Naive thymus-derived CD4-positive, alpha-beta T cell (primary cell): ENCODE measurements at regions of chr13 and their contacts with region 1.

Region 1: DNA sequence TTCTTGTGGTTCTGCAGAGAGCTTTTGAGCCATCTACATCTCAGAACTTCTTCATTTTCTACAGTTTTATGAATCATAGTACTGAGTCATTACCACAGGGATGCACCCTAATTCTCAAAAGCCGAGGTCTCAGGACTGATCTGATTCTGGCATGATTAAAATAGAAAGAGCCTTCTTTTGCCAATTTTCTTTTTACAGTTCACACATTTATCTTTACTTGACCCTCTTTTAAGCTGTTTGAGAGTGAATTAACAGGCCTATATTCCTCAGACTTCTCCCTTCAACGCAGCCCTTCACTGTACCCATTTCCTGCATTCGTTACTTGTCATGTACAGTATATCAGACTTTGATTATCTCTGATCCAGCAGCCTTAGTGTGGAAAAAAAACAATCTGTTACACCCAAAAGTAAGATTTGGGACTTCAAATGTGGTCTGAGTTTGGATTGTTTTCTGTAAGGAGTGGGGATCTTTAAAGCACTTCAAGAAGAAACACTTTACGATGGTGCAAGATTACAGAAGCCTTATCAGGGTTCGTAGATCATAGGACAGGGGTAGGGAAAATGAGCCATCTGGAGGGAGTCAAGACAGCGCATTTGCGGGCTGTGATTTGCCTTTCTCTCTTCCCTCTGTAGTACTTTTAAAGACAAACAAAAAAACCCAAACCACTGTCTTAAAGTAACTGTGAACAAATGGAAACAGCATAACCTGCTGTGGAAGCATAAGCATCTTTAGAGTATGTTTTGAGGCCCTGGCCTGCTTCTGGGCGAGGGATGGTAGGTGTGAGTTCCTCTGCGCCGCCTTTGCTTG is 15.3 kb upstream of the GPR183 start:
- DNase-seq: peak in 6 of 9 donors; percentile 35 to 64 (median 48)
- ATAC-seq: peak; percentile 81
- H3K4me3 ChIP-seq: peak overlapping the region; percentile 2
- H3K4me3 Mint-ChIP-seq: peak overlapping the region; percentile 51 to 84 (median 67)
- H3K27ac ChIP-seq: peak overlapping the region; percentile 77
- H3K27ac Mint-ChIP-seq: peak overlapping the region; percentile 88 to 99 (median 95)
- H3K4me1 ChIP-seq: peaks cover 65 to 66% of the 10 kb centered on the region in 2 donors
- H3K4me1 Mint-ChIP-seq: peaks cover 38 to 95% (median 75%) of the 10 kb centered on the region in 7 donors
- H3K27me3 ChIP-seq: no peaks in the 10 kb centered on the region
- H3K27me3 Mint-ChIP-seq: no peaks in the 10 kb centered on the region

Region 2: GRCh38 chr13:97889803-97890202 is 1432.7 kb before region 1 on chr13:
- CTCF ChIA-PET with region 1: no interaction called
- POLR2A ChIA-PET with region 1: no interaction called
- intact Hi-C with region 1: no loop called
- DNase-seq: no peak
- ATAC-seq: no peak
- H3K4me3 ChIP-seq: no peak overlapping the region
- H3K4me3 Mint-ChIP-seq: no peak overlapping the region
- H3K27ac ChIP-seq: no peak overlapping the region
- H3K27ac Mint-ChIP-seq: no peak overlapping the region
- H3K4me1 ChIP-seq: no peaks in the 10 kb centered on the region
- H3K4me1 Mint-ChIP-seq: no peaks in the 10 kb centered on the region
- H3K27me3 ChIP-seq: no peaks in the 10 kb centered on the region
- H3K27me3 Mint-ChIP-seq: peaks cover 3 to 32% (median 24%) of the 10 kb centered on the region in 5 donors

Region 3: DNA sequence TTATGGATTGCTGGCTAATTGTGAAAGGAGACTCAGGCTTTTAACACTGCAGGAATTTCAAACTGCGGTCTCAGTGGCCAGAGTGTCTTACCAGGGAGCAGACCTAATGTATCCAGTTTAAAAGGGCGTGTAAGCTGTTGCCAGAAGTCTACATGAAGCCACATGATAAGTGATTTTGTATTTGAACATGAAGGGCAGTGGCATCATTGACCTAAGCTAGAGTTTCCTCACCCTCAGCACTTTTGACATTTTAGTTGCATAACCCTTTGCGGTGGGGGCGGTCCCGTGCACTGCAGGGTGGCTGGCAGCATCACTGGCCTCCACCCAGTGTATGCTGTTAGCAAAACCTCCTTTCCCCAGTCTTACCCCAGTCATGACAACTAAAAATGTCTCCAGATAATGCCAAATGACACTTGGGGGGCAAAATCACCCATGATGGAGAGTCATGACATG is 40.7 kb before region 1 on chr13:
- CTCF ChIA-PET with region 1: interaction called, 3 read pairs
- POLR2A ChIA-PET with region 1: interaction called, 3 read pairs
- intact Hi-C with region 1: loop called in 1 of 2 experiments (anchors 1 kb)
- DNase-seq: peak in 7 of 9 donors; percentile 45 to 65 (median 55)
- ATAC-seq: peak; percentile 85
- H3K4me3 ChIP-seq: peak overlapping the region; percentile 10
- H3K4me3 Mint-ChIP-seq: peak overlapping the region; percentile 36 to 85 (median 72)
- H3K27ac ChIP-seq: peak overlapping the region; percentile 73
- H3K27ac Mint-ChIP-seq: peak overlapping the region; percentile 86 to 99 (median 97)
- H3K4me1 ChIP-seq: peaks cover 83 to 87% of the 10 kb centered on the region in 2 donors
- H3K4me1 Mint-ChIP-seq: peaks cover 64 to 99% (median 94%) of the 10 kb centered on the region in 7 donors
- H3K27me3 ChIP-seq: no peaks in the 10 kb centered on the region
- H3K27me3 Mint-ChIP-seq: no peaks in the 10 kb centered on the region

Region 4: DNA sequence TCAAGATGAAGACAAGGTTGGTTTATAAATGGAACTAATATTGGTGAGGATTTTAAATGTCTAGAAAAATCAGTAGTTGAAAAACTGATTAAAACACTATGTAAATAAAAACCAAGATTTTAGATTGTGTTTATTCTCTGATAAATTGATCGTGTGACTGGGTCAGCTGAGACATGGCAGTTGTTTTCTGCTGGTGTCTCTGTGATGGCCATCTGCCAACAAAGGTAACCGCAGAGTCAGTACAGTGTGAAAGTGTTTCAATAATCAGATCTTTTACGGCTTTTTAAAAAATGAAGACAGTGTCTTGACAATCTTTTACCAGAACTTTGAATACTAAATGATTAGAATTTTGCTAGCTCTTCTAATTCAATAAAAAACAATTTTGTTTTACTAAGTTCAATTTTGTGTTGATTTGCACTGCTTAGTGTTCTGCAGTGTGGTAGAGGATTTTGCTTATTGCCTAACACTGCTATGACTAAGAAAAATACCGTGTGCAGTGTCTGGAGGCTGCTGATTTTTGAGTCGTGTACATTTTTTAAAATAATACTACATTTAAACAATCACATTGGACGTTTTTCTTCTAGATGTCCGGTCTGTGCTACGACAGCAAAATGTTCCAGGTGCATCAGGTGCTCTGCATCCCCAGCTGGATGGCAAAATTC is 17.4 kb after region 1 on chr13:
- CTCF ChIA-PET with region 1: interaction called, 7 read pairs
- POLR2A ChIA-PET with region 1: interaction called, 15 read pairs
- intact Hi-C with region 1: loop called (anchors 1 to 2 kb)
- DNase-seq: peak in 6 of 9 donors; percentile 32 to 56 (median 49)
- ATAC-seq: peak; percentile 76
- H3K4me3 ChIP-seq: peak overlapping the region; percentile 42
- H3K4me3 Mint-ChIP-seq: peak overlapping the region in 9 of 10 donors; percentile 23 to 79 (median 65)
- H3K27ac ChIP-seq: peak overlapping the region; percentile 41
- H3K27ac Mint-ChIP-seq: peak overlapping the region in 8 of 9 donors; percentile 46 to 96 (median 88)
- H3K4me1 ChIP-seq: peaks cover 39 to 41% of the 10 kb centered on the region in 2 donors
- H3K4me1 Mint-ChIP-seq: peaks cover 47 to 96% (median 82%) of the 10 kb centered on the region in 7 donors
- H3K27me3 ChIP-seq: no peaks in the 10 kb centered on the region
- H3K27me3 Mint-ChIP-seq: no peaks in the 10 kb centered on the region

Region 5: GRCh38 chr13:99374994-99375737 is 52.7 kb after region 1 on chr13:
- CTCF ChIA-PET with region 1: interaction called, 3 read pairs
- POLR2A ChIA-PET with region 1: interaction called, 10 read pairs
- intact Hi-C with region 1: no loop called
- DNase-seq: peak; percentile 20 to 93 (median 87)
- ATAC-seq: peak; percentile 94
- H3K4me3 ChIP-seq: peak overlapping the region; percentile 38
- H3K4me3 Mint-ChIP-seq: peak overlapping the region; percentile 50 to 87 (median 72)
- H3K27ac ChIP-seq: peak overlapping the region; percentile 88
- H3K27ac Mint-ChIP-seq: peak overlapping the region; percentile 87 to 100 (median 99)
- H3K4me1 ChIP-seq: peaks cover 67 to 84% of the 10 kb centered on the region in 2 donors
- H3K4me1 Mint-ChIP-seq: peaks cover 60 to 100% (median 95%) of the 10 kb centered on the region in 7 donors
- H3K27me3 ChIP-seq: no peaks in the 10 kb centered on the region
- H3K27me3 Mint-ChIP-seq: no peaks in the 10 kb centered on the region

Region 6: GRCh38 chr13:99501184-99501847 is 178.8 kb after region 1 on chr13 and contains the start of gene TM9SF2:
- CTCF ChIA-PET with region 1: no interaction called
- POLR2A ChIA-PET with region 1: no interaction called
- intact Hi-C with region 1: no loop called
- DNase-seq: peak; percentile 94 to 98 (median 96)
- ATAC-seq: peak; percentile 70
- H3K4me3 ChIP-seq: peak within 1 kb of the TSS; percentile 93
- H3K4me3 Mint-ChIP-seq: peak within 1 kb of the TSS; percentile 94 to 100 (median 97)
- H3K27ac ChIP-seq: peak within 1 kb of the TSS; percentile 94
- H3K27ac Mint-ChIP-seq: peak within 1 kb of the TSS; percentile 96 to 99 (median 98)
- H3K4me1 ChIP-seq: peaks cover 47 to 65% of the 10 kb centered on the region in 2 donors
- H3K4me1 Mint-ChIP-seq: peaks cover 57 to 93% (median 85%) of the 10 kb centered on the region in 7 donors
- H3K27me3 ChIP-seq: no peaks in the 10 kb centered on the region
- H3K27me3 Mint-ChIP-seq: peaks cover 0 to 4% (median 0%) of the 10 kb centered on the region in 5 donors
- total RNA-seq, gene TM9SF2: 38.0 to 76.3 (median 53.1) TPM